ENCODE measurements at regions of chr12 and their contacts with region 1.

Region 1: GRCh38 chr12:1605129-1606020 is 11.0 kb upstream of the FBXL14 start:
- DNase-seq: peak; percentile 22 to 80 (median 61)
- ATAC-seq: peak; percentile 74 to 75
- H3K4me3 Mint-ChIP-seq: peak overlapping the region; percentile 82 to 96 (median 88)
- H3K27ac Mint-ChIP-seq: peak overlapping the region; percentile 9 to 93 (median 60)
- H3K4me1 Mint-ChIP-seq: peaks cover 17 to 38% (median 33%) of the 10 kb centered on the region in 4 donors
- H3K27me3 Mint-ChIP-seq: peaks cover 0 to 4% (median 0%) of the 10 kb centered on the region in 5 donors

Region 2: DNA sequence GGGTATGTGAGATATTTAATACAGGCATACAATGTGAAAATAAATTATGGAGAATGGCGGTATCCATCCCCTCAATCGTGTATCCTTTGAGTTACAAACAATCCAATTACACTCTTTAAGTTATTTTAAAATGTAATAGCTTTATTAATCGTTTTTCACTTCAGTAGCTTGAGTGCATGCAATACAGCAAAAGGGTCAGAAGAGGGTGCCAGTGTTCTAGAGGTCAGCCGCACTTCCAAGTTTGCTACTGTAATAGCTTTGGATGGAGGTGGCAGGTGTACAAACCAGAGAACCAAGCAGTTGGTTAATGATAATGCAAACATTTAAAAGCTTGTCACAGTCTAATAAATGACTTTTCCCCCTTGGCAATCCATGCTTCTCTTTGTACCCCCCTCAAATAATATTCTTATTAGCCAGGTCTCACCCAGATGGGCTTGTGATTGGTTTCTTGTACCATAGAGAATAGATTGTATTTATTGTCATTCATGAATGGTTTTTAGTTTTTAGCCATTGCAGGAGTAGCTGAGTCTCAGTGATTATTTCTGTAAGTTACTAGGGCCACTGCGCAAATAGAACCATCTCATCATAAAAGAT is 487.3 kb before region 1 on chr12:
- POLR2A ChIA-PET with region 1: interaction called, 15 read pairs
- DNase-seq: peak; percentile 42 to 85 (median 66)
- ATAC-seq: peak in 1 of 2 donors; percentile 48
- H3K4me3 Mint-ChIP-seq: no peak overlapping the region
- H3K27ac Mint-ChIP-seq: peak overlapping the region in 1 of 10 donors; percentile 85
- H3K4me1 Mint-ChIP-seq: peaks cover 4 to 15% (median 10%) of the 10 kb centered on the region in 4 donors
- H3K27me3 Mint-ChIP-seq: no peaks in the 10 kb centered on the region

Region 3: DNA sequence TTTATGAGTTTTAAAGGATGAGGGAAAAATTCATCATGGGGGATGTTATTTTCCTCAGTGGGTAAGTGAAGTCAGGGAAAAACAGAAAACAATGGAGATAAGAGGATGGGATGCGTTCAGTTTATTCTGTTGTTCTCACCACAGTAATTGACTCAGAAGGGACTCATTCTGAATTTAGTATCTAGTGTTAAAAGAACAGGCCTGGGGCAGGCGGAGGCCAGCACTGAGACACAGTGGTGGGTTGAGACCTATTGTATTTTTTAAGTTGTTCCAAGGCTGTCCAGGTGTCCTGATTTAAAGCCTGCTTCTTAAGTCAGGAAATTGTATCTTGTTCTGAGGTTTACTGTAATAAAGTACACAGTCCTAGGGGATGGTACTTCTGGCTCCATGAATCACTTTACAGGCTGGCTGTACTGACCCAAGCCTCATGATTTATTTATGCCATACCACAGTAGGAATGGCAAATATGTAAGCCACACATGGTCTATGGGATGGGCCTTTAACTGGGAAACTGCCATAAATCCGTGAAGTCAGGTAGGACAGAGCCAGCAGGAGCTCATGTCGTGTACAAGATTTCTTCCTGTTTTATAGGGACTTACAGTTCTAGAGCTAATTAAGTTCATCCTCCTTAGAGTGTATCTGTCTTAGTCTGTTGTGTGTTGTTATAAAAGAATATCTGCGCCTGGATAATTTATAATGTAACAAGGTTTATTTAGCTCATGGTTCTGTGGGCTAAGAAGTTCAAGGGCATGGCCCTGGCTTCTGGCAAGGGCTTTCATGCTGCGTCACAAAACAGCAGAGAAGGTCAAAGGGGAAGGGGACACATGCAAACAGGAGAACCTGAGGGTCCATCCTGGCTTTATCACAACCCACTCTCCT is 255.1 kb before region 1 on chr12:
- POLR2A ChIA-PET with region 1: no interaction called
- DNase-seq: no peak
- ATAC-seq: no peak
- H3K4me3 Mint-ChIP-seq: no peak overlapping the region
- H3K27ac Mint-ChIP-seq: peak overlapping the region in 1 of 10 donors; percentile 22
- H3K4me1 Mint-ChIP-seq: peaks cover 0 to 2% (median 0%) of the 10 kb centered on the region in 4 donors
- H3K27me3 Mint-ChIP-seq: no peaks in the 10 kb centered on the region

Region 4: GRCh38 chr12:1566449-1567135 is 38.8 kb before region 1 on chr12:
- POLR2A ChIA-PET with region 1: no interaction called
- DNase-seq: no peak
- ATAC-seq: no peak
- H3K4me3 Mint-ChIP-seq: no peak overlapping the region
- H3K27ac Mint-ChIP-seq: no peak overlapping the region
- H3K4me1 Mint-ChIP-seq: peaks cover 0 to 1% (median 0%) of the 10 kb centered on the region in 4 donors
- H3K27me3 Mint-ChIP-seq: peaks cover 0 to 7% (median 6%) of the 10 kb centered on the region in 5 donors

Region 5: DNA sequence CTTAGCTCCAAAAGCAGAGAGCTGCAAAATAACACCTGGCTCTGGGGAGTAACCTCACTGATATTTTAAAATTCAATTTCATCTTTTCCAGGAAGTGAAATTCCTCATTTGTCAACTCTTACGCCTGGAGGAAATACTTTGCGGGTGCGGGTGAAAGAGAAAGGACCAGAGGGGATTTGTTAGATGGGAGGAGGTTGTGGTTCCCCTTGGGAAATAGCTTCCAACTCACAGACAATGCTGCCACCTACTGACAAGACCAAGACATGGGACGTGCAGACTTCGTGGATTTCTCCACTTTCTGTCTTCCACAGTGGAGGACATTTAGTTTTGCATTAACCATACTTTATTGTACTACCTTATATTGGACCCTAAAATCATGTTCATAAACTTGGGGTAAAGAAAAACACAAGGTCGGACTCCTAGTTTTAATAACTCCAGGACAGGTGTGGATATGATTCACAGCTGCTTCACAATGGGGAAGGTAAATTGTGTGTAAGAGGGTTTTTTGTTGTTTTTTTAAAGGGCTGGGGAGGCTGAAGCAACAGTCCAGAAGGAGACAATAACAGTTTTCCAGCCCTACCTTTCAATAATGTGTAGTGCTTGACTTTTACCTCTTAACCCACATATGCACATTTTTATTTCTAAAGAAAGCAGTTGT is 21.8 kb before region 1 on chr12:
- POLR2A ChIA-PET with region 1: interaction called, 10 read pairs
- DNase-seq: peak; percentile 24 to 84 (median 64)
- ATAC-seq: peak; percentile 65 to 69
- H3K4me3 Mint-ChIP-seq: peak overlapping the region in 6 of 10 donors; percentile 3 to 55 (median 12)
- H3K27ac Mint-ChIP-seq: peak overlapping the region in 7 of 10 donors; percentile 10 to 69 (median 53)
- H3K4me1 Mint-ChIP-seq: peaks cover 13 to 27% (median 26%) of the 10 kb centered on the region in 4 donors
- H3K27me3 Mint-ChIP-seq: no peaks in the 10 kb centered on the region

Region 6: GRCh38 chr12:1594261-1595025 is 10.9 kb before region 1 on chr12 and contains the start of gene FBXL14:
- POLR2A ChIA-PET with region 1: interaction called, 62 read pairs
- DNase-seq: peak; percentile 85 to 96 (median 92)
- ATAC-seq: peak; percentile 67 to 69
- H3K4me3 Mint-ChIP-seq: peak within 1 kb of the TSS; percentile 89 to 97 (median 96)
- H3K27ac Mint-ChIP-seq: peak within 1 kb of the TSS; percentile 91 to 99 (median 97)
- H3K4me1 Mint-ChIP-seq: peaks cover 28 to 55% (median 51%) of the 10 kb centered on the region in 4 donors
- H3K27me3 Mint-ChIP-seq: no peaks in the 10 kb centered on the region
- polyA plus RNA-seq, gene FBXL14: 12.1 to 24.5 (median 16.6) TPM

Measured in naive thymus-derived CD8-positive, alpha-beta T cell (primary cell).